WTC11 (cell line): ENCODE measurements at regions of chr1 and their contacts with region 1.

Region 1: GRCh38 chr1:200279810-200280411 is 129.9 kb downstream of the ZNF281 start:
- DNase-seq: peak; percentile 80
- ATAC-seq: peak; percentile 89
- H3K4me3 Mint-ChIP-seq: no peak overlapping the region
- H3K27ac Mint-ChIP-seq: no peak overlapping the region
- H3K4me1 Mint-ChIP-seq: peaks cover 8% of the 10 kb centered on the region; the same call in 1 of the 2 replicates
- H3K27me3 Mint-ChIP-seq: no peaks in the 10 kb centered on the region
- CTCF ChIP-seq: peak; percentile 75; the same call in 1 of the 2 replicates

Region 2: DNA sequence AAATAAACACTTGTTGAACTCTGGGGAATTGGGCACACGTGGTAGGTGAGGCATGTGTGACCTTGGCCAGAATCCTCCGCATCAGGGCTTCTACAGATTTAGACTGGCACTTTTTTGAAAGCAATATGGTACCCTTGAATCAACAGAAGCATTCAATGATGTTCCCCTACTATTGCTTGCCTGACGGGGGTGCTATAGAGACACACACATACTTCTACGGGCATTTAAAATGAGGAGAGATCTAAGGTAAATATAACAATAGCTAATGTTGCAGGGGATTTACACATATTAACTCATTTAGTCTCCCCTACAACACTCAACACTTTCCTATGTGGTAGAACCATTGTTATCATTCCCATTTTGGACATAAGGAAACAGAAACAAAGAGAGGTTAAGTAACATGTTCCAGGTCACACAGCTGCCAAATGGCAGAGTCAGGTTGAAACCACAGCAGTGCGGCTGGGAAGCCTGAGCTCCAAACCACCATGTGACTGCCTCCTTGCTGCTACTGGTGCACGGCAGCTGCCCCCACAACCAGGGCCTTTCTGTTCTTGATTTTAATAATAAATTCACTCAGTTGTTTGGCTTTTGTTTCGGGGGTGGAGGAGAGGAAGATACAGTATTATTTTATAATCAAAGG is 17.5 kb before region 1 on chr1:
- CTCF ChIA-PET with region 1: interaction called, 11 read pairs
- POLR2A ChIA-PET with region 1: interaction called, 3 read pairs
- DNase-seq: no peak
- ATAC-seq: peak; percentile 77
- H3K4me3 Mint-ChIP-seq: no peak overlapping the region
- H3K27ac Mint-ChIP-seq: no peak overlapping the region
- H3K4me1 Mint-ChIP-seq: no peaks in the 10 kb centered on the region; the same call in 1 of the 2 replicates
- H3K27me3 Mint-ChIP-seq: no peaks in the 10 kb centered on the region
- CTCF ChIP-seq: peak; percentile 32; the same call in 1 of the 2 replicates

Region 3: DNA sequence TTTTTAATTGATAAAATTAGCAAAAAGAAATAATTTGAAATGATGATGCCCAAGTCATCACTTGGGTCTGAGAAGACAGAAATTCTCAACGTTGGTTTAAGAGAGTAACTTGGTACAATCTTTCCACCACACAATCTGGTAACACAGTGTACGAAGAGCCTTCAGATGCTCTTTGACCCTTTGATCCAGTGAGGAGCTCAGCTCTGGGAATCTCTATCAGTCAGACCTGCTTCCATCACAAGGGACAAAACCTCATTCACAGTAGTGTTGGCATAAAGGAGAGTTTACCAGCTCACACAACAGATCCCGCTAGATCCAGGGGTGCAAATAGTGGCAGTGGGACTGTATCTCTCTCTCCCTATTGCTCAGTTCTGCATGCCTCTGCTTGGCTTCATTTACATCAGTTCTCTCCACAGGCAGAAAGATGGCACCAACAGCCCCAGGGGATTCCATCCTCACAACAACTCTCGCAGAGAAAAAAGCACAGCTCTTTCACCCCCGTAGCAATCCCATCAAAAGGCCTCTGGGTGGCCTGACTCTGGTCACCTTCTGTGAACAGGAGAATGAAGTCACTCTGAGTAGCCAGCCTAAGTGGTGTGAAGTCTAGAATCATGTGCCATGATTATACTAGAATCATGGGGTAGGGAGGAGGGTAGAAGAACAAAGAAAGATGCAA is 10.2 kb after region 1 on chr1:
- CTCF ChIA-PET with region 1: interaction called, 12 read pairs
- POLR2A ChIA-PET with region 1: no interaction called
- DNase-seq: peak; percentile 47
- ATAC-seq: peak; percentile 95
- H3K4me3 Mint-ChIP-seq: no peak overlapping the region
- H3K27ac Mint-ChIP-seq: no peak overlapping the region
- H3K4me1 Mint-ChIP-seq: peaks cover 14% of the 10 kb centered on the region
- H3K27me3 Mint-ChIP-seq: peaks cover 47% of the 10 kb centered on the region
- CTCF ChIP-seq: no peak

Region 4: GRCh38 chr1:200342511-200343311 is 62.8 kb after region 1 on chr1:
- CTCF ChIA-PET with region 1: no interaction called
- POLR2A ChIA-PET with region 1: no interaction called
- DNase-seq: no peak
- ATAC-seq: no peak
- H3K4me3 Mint-ChIP-seq: no peak overlapping the region
- H3K27ac Mint-ChIP-seq: peak overlapping the region; percentile 30; the same call in 1 of the 2 replicates
- H3K4me1 Mint-ChIP-seq: peaks cover 26% of the 10 kb centered on the region
- H3K27me3 Mint-ChIP-seq: no peaks in the 10 kb centered on the region
- CTCF ChIP-seq: no peak

Region 5: DNA sequence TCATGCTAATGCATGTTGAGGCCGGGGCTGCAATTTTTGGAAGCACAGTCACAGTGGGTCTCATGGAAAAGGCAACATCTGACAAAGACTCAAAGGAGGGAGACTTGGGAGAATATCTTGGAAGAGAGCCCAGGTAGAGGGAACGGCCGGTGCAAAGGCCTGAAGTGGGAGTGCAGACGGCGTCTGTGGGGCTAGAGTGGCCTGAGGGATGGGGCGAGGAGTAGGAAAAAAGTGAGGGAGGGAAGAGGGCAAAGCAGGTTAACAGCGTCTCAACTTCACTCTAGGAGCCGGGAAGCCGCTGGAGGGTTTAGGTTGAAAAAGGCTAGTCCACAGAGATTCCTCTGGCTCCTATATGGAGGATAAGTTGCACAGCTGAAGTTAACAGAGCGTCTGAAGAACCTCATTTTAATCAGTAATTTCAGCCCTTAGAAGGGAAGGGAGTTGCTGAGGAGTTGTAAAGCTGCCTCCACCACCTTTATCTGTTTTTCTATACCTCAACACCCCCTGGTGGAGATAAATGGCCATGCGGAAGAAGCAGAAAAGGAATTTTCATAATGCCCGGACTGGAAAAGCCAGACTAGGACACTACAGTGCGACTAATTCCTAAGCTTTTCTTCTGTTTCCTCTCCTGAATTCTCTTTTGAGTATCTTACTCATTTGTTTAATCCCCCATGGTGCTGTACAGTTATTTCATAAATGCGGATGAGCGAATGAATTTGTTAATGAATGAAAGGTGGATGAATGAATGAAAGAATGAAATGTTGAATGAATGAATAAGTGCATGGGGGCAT is 208.7 kb after region 1 on chr1:
- CTCF ChIA-PET with region 1: interaction called, 12 read pairs
- POLR2A ChIA-PET with region 1: no interaction called
- DNase-seq: peak; percentile 54
- ATAC-seq: peak; percentile 83
- H3K4me3 Mint-ChIP-seq: peak overlapping the region; percentile 29
- H3K27ac Mint-ChIP-seq: no peak overlapping the region
- H3K4me1 Mint-ChIP-seq: peaks cover 11% of the 10 kb centered on the region
- H3K27me3 Mint-ChIP-seq: peaks cover 9% of the 10 kb centered on the region
- CTCF ChIP-seq: peak; percentile 75